CD8-positive, alpha-beta T cell (primary cell): ENCODE measurements at regions of chr5 and their contacts with region 1.

Region 1: DNA sequence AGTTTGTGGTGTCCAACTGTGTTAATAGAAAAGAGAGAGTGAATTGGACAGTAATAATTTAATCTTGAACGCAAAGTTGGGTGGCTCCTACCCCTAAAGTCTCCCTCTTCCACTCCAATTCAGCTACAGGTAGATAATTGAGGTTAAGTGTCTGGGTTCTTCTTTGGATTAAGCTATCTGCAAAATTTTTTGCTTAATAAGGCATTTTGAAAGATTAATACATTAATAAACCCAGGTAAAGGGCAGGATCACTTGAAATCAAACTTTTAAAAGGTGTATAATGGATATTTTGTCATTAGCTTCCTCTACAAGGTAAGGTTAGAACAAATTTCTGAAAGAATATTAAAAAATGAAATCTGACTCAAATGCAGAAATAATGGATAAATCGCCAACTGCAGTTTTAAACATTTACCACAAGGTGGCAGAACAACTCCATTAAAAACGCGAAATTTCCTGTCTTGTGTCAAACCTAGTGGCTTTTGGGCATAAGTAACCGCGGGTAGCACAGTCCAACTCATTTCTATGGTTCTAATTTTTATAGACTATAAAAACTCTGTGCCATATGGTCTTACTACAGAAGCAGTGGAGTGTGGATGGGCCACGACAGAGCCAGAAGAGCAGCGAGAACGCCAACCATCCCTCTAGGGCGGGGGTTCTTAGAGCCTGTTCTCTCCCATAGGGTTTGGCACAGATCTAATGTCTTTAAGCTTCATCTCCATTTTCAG is 276.5 kb downstream of the ARHGEF28 start:
- DNase-seq: peak in 2 of 9 experiments; percentile 56 to 68
- ATAC-seq: peak; percentile 38
- H3K4me3 ChIP-seq: no peak overlapping the region
- H3K4me3 Mint-ChIP-seq: no peak overlapping the region
- H3K27ac ChIP-seq: no peak overlapping the region
- H3K27ac Mint-ChIP-seq: no peak overlapping the region
- H3K4me1 ChIP-seq: no peaks in the 10 kb centered on the region
- H3K4me1 Mint-ChIP-seq: no peaks in the 10 kb centered on the region
- H3K27me3 ChIP-seq: no peaks in the 10 kb centered on the region
- H3K27me3 Mint-ChIP-seq: peaks cover 17% of the 10 kb centered on the region
- CTCF ChIP-seq: peak; percentile 97

Region 2: DNA sequence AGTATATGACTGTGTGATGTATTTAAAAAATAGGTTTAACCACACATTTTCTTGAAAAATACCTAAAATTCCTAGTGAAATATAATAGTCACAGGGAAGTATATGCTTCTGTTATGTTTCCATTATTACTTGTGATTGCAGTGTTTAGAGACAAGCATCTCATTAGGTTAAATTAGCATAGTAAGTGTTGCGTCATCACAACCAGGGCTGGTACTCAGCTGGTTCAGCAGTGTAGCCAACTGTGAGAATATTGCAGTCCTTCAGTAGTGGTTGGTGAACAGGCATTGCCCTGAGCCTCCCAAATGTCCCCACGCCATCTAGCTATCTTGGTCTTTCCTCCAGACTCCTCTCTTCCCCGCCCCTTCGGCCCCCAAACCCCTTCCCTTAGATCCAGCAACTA is 14.8 kb before region 1 on chr5:
- CTCF ChIA-PET with region 1: interaction called, 16 read pairs
- POLR2A ChIA-PET with region 1: no interaction called
- intact Hi-C with region 1: no loop called
- DNase-seq: no peak
- ATAC-seq: no peak
- H3K4me3 ChIP-seq: no peak overlapping the region
- H3K4me3 Mint-ChIP-seq: no peak overlapping the region
- H3K27ac ChIP-seq: no peak overlapping the region
- H3K27ac Mint-ChIP-seq: no peak overlapping the region
- H3K4me1 ChIP-seq: no peaks in the 10 kb centered on the region
- H3K4me1 Mint-ChIP-seq: no peaks in the 10 kb centered on the region
- H3K27me3 ChIP-seq: no peaks in the 10 kb centered on the region
- H3K27me3 Mint-ChIP-seq: peaks cover 21% of the 10 kb centered on the region
- CTCF ChIP-seq: no peak

Region 3: DNA sequence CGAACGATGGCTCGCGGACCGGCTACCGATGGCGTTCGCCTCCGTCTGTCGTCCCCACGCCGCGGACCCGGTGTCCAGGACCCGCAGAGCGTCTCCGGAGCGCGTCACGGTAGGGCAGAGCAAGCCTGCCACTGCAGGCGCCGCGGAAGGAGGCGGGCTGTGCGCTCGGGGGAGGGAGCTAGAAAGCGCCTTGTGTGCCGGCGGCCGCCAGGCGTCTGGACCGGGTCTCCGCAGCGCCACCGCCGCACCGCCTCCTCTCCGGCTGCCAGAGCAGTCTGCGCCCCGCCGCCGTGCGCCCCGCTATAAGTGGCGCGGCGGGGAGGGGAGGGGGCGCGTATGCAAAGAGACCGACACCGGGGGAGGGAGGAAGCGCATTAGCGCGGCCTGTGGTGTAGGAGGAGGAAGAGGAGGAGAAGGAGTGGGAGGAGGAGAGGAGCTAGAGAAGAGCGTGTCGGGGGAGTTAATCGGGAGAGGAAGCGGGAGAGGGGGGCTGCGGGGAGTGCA is 738.0 kb after region 1 on chr5 and contains the start of gene ENC1:
- CTCF ChIA-PET with region 1: interaction called, 67 read pairs
- POLR2A ChIA-PET with region 1: no interaction called
- intact Hi-C with region 1: no loop called
- DNase-seq: peak; percentile 51 to 88 (median 71)
- ATAC-seq: peak; percentile 84
- H3K4me3 ChIP-seq: peak within 1 kb of the TSS; percentile 58 to 87
- H3K4me3 Mint-ChIP-seq: peak within 1 kb of the TSS; percentile 91
- H3K27ac ChIP-seq: peak within 1 kb of the TSS; percentile 31 to 66
- H3K27ac Mint-ChIP-seq: peak within 1 kb of the TSS; percentile 62
- H3K4me1 ChIP-seq: peaks cover 16% of the 10 kb centered on the region
- H3K4me1 Mint-ChIP-seq: peaks cover 28% of the 10 kb centered on the region
- H3K27me3 ChIP-seq: peaks cover 0 to 2% of the 10 kb centered on the region in 2 experiments
- H3K27me3 Mint-ChIP-seq: peaks cover 22% of the 10 kb centered on the region
- CTCF ChIP-seq: no peak
- total RNA-seq, gene ENC1: 44.2 to 51.1 TPM

Region 4: GRCh38 chr5:74657165-74657564 is 754.7 kb after region 1 on chr5:
- CTCF ChIA-PET with region 1: interaction called, 24 read pairs
- POLR2A ChIA-PET with region 1: no interaction called
- intact Hi-C with region 1: no loop called
- DNase-seq: no peak
- ATAC-seq: no peak
- H3K4me3 ChIP-seq: no peak overlapping the region
- H3K4me3 Mint-ChIP-seq: no peak overlapping the region
- H3K27ac ChIP-seq: no peak overlapping the region
- H3K27ac Mint-ChIP-seq: no peak overlapping the region
- H3K4me1 ChIP-seq: no peaks in the 10 kb centered on the region
- H3K4me1 Mint-ChIP-seq: no peaks in the 10 kb centered on the region
- H3K27me3 ChIP-seq: no peaks in the 10 kb centered on the region
- H3K27me3 Mint-ChIP-seq: peaks cover 28% of the 10 kb centered on the region
- CTCF ChIP-seq: no peak

Region 5: DNA sequence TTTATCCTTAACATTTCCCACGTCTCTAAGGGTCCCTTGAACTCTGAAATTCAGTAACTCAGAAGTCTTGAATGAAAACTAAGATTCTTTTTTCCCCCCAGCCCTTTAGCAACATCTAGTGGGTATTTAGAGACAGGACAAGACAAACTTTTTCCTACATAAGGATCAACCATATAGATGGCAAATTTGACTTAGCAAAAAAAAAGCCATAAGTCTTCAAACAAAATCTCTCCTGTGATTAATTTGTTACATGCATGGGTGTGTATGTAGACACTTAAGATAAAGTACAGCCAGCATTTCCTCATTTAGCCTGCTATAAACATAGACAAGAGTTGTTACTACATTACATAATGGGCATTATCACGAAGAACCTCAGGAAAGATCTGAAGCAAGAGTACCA is 1363.2 kb after region 1 on chr5:
- CTCF ChIA-PET with region 1: no interaction called
- POLR2A ChIA-PET with region 1: no interaction called
- intact Hi-C with region 1: loop called (anchors 1 to 5 kb)
- DNase-seq: peak in 2 of 9 experiments; percentile 57 to 67
- ATAC-seq: peak; percentile 78
- H3K4me3 ChIP-seq: no peak overlapping the region
- H3K4me3 Mint-ChIP-seq: no peak overlapping the region
- H3K27ac ChIP-seq: no peak overlapping the region
- H3K27ac Mint-ChIP-seq: no peak overlapping the region
- H3K4me1 ChIP-seq: no peaks in the 10 kb centered on the region
- H3K4me1 Mint-ChIP-seq: peaks cover 3% of the 10 kb centered on the region
- H3K27me3 ChIP-seq: no peaks in the 10 kb centered on the region
- H3K27me3 Mint-ChIP-seq: peaks cover 5% of the 10 kb centered on the region
- CTCF ChIP-seq: peak; percentile 68